ENCODE measurements at regions of chr13 and their contacts with region 1.

Region 1: GRCh38 chr13:75920536-75920935 is 284.4 kb downstream of the LMO7 start:
- DNase-seq: no peak
- ATAC-seq: no peak

Region 2: GRCh38 chr13:75656425-75656989 is 264.0 kb before region 1 on chr13:
- intact Hi-C with region 1: no loop called
- DNase-seq: no peak
- ATAC-seq: no peak

Region 3: GRCh38 chr13:75830842-75831241 is 89.7 kb before region 1 on chr13:
- intact Hi-C with region 1: no loop called
- DNase-seq: no peak
- ATAC-seq: no peak

Region 4: GRCh38 chr13:75960538-75960994 is 40.0 kb after region 1 on chr13:
- intact Hi-C with region 1: no loop called
- DNase-seq: no peak
- ATAC-seq: no peak

Region 5: GRCh38 chr13:75993823-75994222 is 73.3 kb after region 1 on chr13:
- intact Hi-C with region 1: loop called (anchors 5 kb)
- DNase-seq: no peak
- ATAC-seq: no peak

Region 6: GRCh38 chr13:76048675-76049375 is 128.3 kb after region 1 on chr13:
- intact Hi-C with region 1: no loop called
- DNase-seq: no peak
- ATAC-seq: no peak

Measured in Right ventricle myocardium inferior (tissue), 1 donor.